ENCODE measurements at regions of chr16 and their contacts with region 1.

Region 1: DNA sequence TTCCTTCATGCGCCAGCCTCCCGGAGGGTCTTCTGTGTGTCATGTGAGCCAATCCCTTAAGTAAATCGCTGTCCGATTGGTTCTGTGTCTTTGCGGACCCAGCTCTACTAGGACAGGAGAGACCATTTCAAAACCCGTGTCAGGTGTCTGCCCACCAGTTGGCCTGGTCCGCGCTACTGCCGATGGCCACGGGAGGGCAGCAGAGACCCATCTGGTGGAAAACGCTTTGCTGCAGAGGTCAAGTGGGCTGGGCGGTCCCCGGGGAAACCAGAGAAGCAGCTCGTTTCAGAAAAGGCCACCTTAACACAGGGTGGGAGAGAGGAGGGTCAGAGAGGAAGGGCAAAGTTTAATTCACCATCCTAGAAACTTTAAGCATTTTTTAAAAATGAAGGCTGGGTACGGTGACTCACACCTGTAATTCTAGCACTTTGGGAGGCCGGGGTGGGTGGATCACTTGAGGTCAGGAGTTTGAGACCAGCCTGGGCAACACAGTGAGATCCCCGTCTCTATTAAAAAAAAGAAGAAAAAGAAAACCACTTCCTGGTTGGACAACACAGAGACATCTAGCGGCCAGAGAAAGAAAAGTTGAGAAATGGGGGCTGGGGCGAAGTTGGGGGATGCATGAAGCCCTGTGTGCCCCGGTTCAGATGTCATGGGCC is 2.8 kb upstream of the CIBAR2 start:
- DNase-seq: peak; percentile 71 to 94 (median 87)

Region 2: GRCh38 chr16:84933774-84934631 is 181.0 kb before region 1 on chr16:
- intact Hi-C with region 1: no loop called
- DNase-seq: peak in 40 of 42 donors; percentile 28 to 82 (median 61)

Region 3: DNA sequence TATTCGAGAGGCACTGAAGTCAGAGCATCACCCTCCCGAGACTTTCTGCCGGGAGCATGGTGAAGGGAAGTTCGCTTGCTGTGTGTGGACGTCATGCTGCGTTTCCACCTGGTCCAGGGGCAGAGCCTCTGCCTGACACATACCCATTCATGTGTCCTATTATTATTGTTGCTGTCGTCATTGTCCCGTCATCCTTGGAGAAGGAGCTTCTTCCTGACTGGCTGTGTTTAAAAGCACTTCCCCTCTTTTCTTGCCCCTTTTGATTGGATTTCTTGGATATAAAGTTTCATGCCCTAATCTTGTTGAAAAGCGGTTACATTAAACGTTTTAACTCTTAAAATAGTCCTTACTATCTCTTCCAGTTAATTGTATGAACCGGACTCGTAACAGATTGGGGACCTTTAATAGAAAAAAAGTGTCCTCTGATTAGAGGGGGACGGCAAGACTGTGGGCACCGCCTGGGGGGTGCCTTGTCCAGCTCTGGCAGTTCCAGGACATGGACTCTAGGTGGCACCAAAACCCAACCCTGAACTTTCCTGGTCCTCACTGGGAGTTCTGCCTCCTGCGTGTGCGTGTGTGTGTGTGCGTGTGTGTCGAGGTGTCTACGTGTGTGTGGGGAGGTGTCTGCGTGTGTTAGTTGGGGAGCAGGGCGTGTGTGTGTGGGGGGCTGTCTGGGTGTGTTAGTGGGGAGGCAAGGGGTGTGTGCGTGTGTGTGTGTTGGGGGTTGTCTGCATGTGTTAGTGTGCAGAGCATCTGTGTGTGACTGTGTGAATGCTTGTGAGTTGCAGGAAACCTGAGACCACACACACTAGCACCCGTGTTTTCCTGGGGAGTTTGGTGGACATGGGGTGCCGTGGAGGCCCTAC is 130.5 kb after region 1 on chr16:
- intact Hi-C with region 1: loop called (anchors 10 kb)
- DNase-seq: peak; percentile 33 to 84 (median 64)